Testis (tissue), 5 donors: ENCODE measurements at regions of chr1 and their contacts with region 1.

Region 1: DNA sequence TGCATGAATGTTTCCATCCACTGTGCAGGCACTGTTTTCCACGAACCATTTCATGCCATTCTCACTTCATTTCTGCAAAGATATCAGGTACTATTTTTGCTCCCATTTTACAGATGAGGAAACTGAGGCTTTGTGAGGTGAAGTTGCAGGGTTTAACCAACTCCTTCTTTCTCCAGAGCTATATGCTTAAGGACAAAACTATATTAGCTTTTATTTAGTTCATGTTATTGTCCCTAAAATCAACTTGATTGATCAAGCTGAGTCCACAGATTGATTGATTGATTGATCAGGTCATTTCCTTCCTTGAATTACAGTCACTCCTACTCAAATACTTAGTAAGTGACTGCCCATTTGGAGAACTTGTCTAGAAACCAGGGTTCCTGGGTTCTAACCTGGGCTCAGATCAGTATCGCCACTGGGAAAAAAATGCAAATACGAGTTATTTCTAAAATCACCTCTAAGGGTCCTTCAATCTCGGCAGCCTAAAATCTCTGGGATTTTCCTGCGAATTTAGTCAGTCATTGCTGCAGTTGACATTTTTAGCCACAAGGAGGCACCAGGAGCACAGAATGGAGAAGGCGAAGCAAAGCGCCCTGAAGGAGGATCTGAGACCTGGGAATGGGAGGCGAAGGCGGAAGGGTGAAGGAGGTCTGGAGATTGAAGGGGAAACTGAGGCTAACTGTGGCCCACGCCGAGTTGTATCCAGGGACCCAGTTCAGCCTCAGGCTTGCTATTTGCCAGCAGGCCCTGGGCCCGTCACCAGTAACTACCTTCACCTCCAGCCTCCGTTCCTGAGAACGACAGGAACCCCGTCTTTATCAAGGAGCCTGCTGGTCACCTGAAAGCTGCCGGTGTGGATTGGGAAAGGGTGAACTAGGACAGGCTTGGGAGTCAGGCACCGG is 14.3 kb upstream of the MUL1 start:
- DNase-seq: peak; percentile 92
- H3K4me3 ChIP-seq: no peak overlapping the region
- H3K27ac ChIP-seq: no peak overlapping the region
- H3K4me1 ChIP-seq: no peaks in the 10 kb centered on the region
- H3K27me3 ChIP-seq: no peaks in the 10 kb centered on the region
- CTCF ChIP-seq: peak; percentile 85 to 94 (median 90)
- POLR2A ChIP-seq: no peak

Region 2: GRCh38 chr1:20466273-20466672 is 55.9 kb before region 1 on chr1:
- intact Hi-C with region 1: no loop called
- DNase-seq: no peak
- H3K4me3 ChIP-seq: no peak overlapping the region
- H3K27ac ChIP-seq: no peak overlapping the region
- H3K4me1 ChIP-seq: no peaks in the 10 kb centered on the region
- H3K27me3 ChIP-seq: no peaks in the 10 kb centered on the region
- CTCF ChIP-seq: no peak
- POLR2A ChIP-seq: no peak

Region 3: DNA sequence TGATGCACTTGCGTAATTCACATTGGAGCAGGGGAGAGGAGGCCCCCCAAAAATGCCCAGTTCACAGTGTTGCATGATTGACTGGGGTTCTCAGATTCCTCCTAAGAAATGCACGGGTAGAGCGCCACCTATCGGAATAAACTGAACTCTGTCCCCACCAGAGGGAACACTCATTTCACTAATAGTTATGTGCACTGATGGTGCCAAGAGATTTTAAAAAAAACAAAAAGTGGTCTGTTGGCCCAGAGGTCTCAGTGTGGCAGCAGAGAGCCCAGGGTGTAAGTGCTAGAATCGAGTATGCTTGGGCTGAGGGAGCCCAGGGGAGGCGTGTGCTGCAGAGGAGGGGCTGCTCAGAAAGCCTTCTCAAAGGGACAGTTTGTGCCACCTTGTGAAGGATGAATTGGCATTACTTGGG is 118.0 kb after region 1 on chr1:
- intact Hi-C with region 1: loop called (anchors 10 kb)
- DNase-seq: peak; percentile 57
- H3K4me3 ChIP-seq: no peak overlapping the region
- H3K27ac ChIP-seq: no peak overlapping the region
- H3K4me1 ChIP-seq: no peaks in the 10 kb centered on the region
- H3K27me3 ChIP-seq: no peaks in the 10 kb centered on the region
- CTCF ChIP-seq: peak; percentile 60 to 84 (median 74)
- POLR2A ChIP-seq: no peak

Region 4: DNA sequence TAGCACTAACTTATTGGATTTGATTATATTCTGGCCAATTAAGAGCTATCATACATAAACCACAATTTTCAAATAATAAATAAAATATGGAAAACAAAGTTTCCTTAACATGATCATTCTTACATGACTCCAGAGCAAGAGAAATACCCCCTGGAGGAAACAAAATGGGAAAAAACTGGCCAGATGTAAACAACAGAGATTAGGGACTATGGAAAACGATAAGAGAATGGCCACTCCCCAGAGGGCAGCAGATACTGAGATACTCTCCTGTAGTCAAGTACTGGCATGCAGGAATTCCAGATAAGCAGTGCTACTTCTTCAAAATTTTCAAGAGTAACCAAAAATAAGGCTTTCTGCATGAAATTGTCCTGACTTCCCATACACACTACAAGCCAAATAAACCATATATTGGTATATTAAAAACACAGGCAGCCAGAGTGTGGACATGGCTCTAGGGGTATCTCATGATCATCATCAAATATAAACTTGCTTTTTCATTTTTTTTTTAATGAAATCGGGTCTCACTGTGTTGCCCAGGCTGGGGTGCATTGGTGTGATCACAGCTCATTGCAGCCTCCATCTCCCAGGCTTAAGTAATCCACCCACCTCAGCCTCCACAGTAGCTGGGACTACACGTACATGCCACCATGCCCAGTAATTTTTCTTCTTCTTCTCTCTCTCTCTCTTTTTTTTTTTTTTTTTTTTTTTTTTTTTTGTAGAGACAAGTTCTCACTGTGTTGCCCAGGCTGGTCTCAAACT is 536.0 kb after region 1 on chr1:
- intact Hi-C with region 1: no loop called
- DNase-seq: no peak
- H3K4me3 ChIP-seq: no peak overlapping the region
- H3K27ac ChIP-seq: no peak overlapping the region
- H3K4me1 ChIP-seq: peaks cover 5% of the 10 kb centered on the region
- H3K27me3 ChIP-seq: no peaks in the 10 kb centered on the region
- CTCF ChIP-seq: no peak
- POLR2A ChIP-seq: no peak